ENCODE measurements at regions of chr17 and their contacts with region 1.

Region 1: GRCh38 chr17:49567871-49568694 is 7.6 kb upstream of the NXPH3 start:
- DNase-seq: peak; percentile 92
- H3K4me3 ChIP-seq: peak overlapping the region; percentile 40 to 56
- H3K27ac ChIP-seq: no peak overlapping the region
- H3K4me1 ChIP-seq: peaks cover 0 to 14% of the 10 kb centered on the region in 2 experiments; a peak in 1 of 4 replicates
- H3K27me3 ChIP-seq: peaks cover 61% of the 10 kb centered on the region
- CTCF ChIP-seq: peak; percentile 99
- EP300 ChIP-seq: no peak
- RAD21 ChIP-seq: peak; percentile 99

Region 2: GRCh38 chr17:49414622-49415350 is 153.3 kb before region 1 on chr17 and contains the start of gene PHB1:
- CTCF ChIA-PET with region 1: interaction called, 40 read pairs
- POLR2A ChIA-PET with region 1: no interaction called
- DNase-seq: peak; percentile 97
- H3K4me3 ChIP-seq: peak within 1 kb of the TSS; percentile 86 to 87
- H3K27ac ChIP-seq: peak within 1 kb of the TSS in 1 of 2 experiments; percentile 48; a peak in 1 of 4 replicates
- H3K4me1 ChIP-seq: peaks cover 0 to 11% of the 10 kb centered on the region in 2 experiments; a peak in 2 of 4 replicates
- H3K27me3 ChIP-seq: no peaks in the 10 kb centered on the region
- CTCF ChIP-seq: no peak
- EP300 ChIP-seq: no peak
- RAD21 ChIP-seq: no peak
- polyA plus RNA-seq, gene PHB1: 379 and 477 TPM in 2 replicates

Region 3: GRCh38 chr17:49496183-49496866 is 71.8 kb before region 1 on chr17:
- CTCF ChIA-PET with region 1: interaction called, 13 read pairs
- POLR2A ChIA-PET with region 1: interaction called, 3 read pairs
- DNase-seq: peak; percentile 96
- H3K4me3 ChIP-seq: peak overlapping the region; percentile 54 to 63
- H3K27ac ChIP-seq: no peak overlapping the region; a peak in 1 of 4 replicates
- H3K4me1 ChIP-seq: peaks cover 5 to 42% of the 10 kb centered on the region in 2 experiments; a peak in 2 of 4 replicates
- H3K27me3 ChIP-seq: peaks cover 80% of the 10 kb centered on the region
- CTCF ChIP-seq: peak; percentile 81
- EP300 ChIP-seq: no peak
- RAD21 ChIP-seq: peak; percentile 73

Region 4: DNA sequence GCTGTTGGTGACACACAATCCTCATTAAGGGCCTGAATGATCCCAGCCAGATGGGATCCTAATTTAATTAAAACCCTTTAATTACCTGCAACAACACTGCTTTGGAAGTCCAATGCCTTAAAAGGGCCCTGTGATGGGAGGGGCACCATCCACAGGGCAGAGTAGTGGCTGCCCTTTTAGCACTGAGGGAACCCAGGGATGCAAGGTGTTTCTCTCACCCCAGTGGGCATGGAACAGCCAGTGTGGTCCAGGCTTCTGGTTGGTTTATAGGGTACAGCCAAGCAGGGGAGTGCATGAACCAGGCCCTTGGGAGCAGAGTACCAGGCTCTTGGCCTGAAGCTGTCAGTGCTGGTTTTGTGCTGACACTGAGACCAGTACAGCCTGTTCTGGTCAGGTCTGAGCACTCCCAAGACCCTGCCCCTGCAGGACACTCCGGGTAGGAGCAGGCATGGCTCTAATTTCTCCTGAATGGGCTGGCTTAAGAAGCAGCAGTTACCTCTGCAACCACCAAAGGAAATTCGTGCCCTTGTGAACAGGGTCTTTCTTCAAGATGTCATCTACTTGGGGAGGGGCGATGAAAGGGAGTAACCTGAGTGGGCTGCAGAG is 17.4 kb after region 1 on chr17:
- CTCF ChIA-PET with region 1: interaction called, 63 read pairs
- POLR2A ChIA-PET with region 1: no interaction called
- DNase-seq: peak; percentile 56
- H3K4me3 ChIP-seq: no peak overlapping the region
- H3K27ac ChIP-seq: no peak overlapping the region
- H3K4me1 ChIP-seq: peaks cover 8 to 28% of the 10 kb centered on the region in 2 experiments; a peak in 3 of 4 replicates
- H3K27me3 ChIP-seq: no peaks in the 10 kb centered on the region
- CTCF ChIP-seq: peak; percentile 39; the same call in 1 of the 2 replicates
- EP300 ChIP-seq: no peak
- RAD21 ChIP-seq: no peak

Region 5: DNA sequence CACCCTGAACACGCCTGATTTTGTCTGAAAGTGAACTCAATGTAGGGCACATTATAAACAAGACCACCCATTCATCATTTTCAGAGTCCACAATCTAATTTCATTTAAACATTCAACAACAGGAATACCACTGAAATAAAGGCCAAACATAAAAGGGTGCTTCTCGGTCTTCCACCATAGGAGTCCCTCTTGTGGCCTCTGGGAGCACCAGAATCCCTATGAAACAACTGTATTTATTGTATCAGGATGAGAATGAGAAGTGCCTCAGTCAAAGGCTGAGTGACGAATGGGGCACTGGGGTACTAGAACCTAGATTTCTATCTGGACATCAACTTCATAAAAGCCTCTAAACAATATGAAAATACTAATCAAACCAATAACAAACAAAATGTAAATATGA is 48.0 kb after region 1 on chr17:
- CTCF ChIA-PET with region 1: interaction called, 15 read pairs
- POLR2A ChIA-PET with region 1: no interaction called
- DNase-seq: no peak
- H3K4me3 ChIP-seq: no peak overlapping the region
- H3K27ac ChIP-seq: no peak overlapping the region
- H3K4me1 ChIP-seq: no peaks in the 10 kb centered on the region
- H3K27me3 ChIP-seq: no peaks in the 10 kb centered on the region
- CTCF ChIP-seq: peak; percentile 54
- EP300 ChIP-seq: no peak
- RAD21 ChIP-seq: no peak

Region 6: DNA sequence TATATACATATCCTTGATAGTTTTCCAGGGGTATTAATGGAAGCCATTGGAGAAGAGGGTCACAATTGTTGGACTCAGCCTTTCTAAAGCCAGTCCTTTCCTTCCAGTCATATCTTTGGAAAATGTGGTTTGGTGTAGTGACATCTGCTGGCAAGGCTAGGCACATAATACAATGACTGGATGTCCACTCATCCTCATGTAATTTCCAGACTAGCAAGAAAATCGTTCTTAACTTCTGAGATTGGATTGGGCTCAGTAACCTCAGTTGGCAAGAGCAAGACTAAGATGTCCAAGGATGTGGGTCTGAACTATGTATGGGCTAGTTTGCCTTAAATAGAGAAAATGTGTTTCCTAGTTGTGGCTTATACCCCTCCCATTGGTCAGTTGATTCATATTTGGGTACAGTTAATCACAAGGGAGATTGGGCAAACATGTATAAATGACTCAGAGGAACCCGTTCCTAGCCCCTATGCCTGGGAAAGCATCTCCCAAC is 211.7 kb after region 1 on chr17:
- CTCF ChIA-PET with region 1: interaction called, 21 read pairs
- POLR2A ChIA-PET with region 1: no interaction called
- DNase-seq: peak; percentile 40
- H3K4me3 ChIP-seq: no peak overlapping the region
- H3K27ac ChIP-seq: 0 out of 4 replicates have a peak overlapping the region, but pooled peaks of 1 of the 2 experiments have one; percentile 3
- H3K4me1 ChIP-seq: no peaks in the 10 kb centered on the region; a peak in 1 of 4 replicates
- H3K27me3 ChIP-seq: peaks cover 8% of the 10 kb centered on the region; the same call in 1 of the 2 replicates
- CTCF ChIP-seq: peak; percentile 74
- EP300 ChIP-seq: no peak
- RAD21 ChIP-seq: peak; percentile 71

Measured in SK-N-SH (cell line).